Posterior cingulate gyrus (tissue), 11 donors: ENCODE measurements at regions of chr15 and their contacts with region 1.

Region 1: GRCh38 chr15:59299929-59300617 is 72.6 kb downstream of the MYO1E start:
- DNase-seq: peak in 3 of 10 donors; percentile 14 to 43 (median 23)

Region 2: DNA sequence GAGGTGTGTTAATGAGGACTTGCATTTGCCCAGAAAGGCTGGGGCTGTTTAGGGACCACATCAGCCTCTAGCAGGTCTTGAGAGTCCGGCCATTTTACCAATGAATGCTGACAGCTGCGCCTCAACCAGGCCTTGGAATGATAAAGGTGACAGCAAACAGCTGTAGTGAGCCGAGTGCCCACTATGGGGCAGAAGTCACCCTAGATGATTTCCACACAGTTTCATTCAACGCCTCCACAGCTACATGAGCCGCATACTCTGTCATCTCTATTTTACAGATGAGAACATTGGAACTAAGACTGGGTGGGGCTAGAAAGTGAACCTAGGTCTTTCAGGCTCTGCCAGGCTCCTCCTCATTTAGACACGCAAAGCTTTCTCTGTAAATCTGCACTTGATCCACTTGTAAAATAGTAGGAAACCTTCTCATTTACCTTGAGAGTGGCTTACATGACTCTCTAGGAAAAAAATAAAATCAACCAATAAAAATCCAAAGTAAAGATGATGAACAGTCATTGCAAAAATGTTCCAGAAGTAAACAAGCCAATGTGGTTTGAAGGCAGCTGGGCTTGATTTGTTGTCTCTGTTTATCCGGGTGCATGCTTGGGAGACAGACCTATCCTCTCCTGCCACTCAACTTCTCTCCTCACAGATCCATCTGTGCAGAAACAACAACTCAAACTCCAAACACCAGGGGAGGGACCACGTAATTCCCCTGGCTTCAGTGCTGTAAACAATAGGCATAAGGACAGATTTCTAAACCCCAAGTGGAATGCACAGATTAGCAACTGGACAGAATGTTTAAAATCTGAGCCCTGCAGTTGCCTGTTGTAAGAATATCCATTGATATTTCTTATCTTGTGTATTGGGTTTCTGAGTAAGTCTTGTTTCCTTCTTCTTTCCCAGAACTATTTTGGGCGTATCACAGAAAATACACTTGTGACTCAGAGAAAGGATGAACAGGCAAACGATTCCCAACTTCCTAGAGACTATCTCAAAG is 124.9 kb before region 1 on chr15:
- intact Hi-C with region 1: loop called (anchors 10 kb)
- DNase-seq: peak in 8 of 10 donors; percentile 22 to 94 (median 62)

Region 3: DNA sequence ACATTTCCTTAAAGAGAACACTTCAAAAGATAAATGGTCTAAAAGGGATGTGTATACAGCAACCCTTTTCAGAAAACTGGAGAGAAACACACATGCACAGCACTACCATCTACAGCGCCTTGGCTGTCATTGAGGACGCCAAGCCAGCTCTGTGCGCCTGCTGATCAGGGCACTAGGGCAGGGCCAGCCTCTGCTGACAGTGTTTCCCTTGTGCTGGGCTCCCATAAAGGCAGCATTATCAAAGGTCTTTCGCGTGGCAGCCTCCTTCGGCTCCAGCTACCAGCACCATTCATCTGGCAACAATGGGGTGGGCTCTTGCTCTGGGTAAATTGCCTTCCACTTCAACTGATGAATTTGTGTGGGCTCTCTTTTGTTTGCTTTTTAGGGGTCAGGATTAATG is 40.0 kb before region 1 on chr15:
- intact Hi-C with region 1: no loop called
- DNase-seq: peak; percentile 62 to 98 (median 82)

Region 4: GRCh38 chr15:59424616-59425015 is 124.5 kb after region 1 on chr15:
- intact Hi-C with region 1: no loop called
- DNase-seq: no peak